PC-9 (cell line): ENCODE measurements at regions of chr20 and their contacts with region 1.

Region 1: GRCh38 chr20:61170496-61171320 is 81.4 kb upstream of the CDH4 start:
- DNase-seq: no peak
- H3K4me3 ChIP-seq: no peak overlapping the region
- H3K27ac ChIP-seq: no peak overlapping the region
- H3K4me1 ChIP-seq: no peaks in the 10 kb centered on the region
- H3K27me3 ChIP-seq: peaks cover 20% of the 10 kb centered on the region
- CTCF ChIP-seq: no peak

Region 2: DNA sequence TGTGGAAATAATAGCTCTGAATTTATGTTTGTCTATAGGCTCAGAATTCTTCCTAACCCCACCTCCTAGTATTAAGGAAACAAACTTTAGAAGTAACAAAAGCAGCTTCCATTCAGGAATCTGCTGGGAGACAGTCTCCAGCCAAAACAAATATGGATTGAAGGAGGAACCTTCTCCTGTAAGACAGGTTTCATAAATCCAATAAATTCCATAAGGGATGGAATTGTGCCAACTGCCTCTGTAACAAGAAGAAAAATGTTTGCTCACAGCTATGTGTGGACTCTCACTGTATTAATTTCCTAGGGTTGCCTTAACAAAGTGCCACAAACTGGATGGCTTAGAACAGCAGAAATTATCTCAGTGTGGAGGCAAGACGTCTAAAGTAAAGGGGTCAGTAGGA is 1244.8 kb before region 1 on chr20:
- CTCF ChIA-PET with region 1: no interaction called
- POLR2A ChIA-PET with region 1: no interaction called
- intact Hi-C with region 1: no loop called
- DNase-seq: peak in 1 of 2 experiments; percentile 95
- H3K4me3 ChIP-seq: no peak overlapping the region
- H3K27ac ChIP-seq: peak overlapping the region; percentile 48
- H3K4me1 ChIP-seq: peaks cover 29% of the 10 kb centered on the region
- H3K27me3 ChIP-seq: no peaks in the 10 kb centered on the region
- CTCF ChIP-seq: no peak

Region 3: DNA sequence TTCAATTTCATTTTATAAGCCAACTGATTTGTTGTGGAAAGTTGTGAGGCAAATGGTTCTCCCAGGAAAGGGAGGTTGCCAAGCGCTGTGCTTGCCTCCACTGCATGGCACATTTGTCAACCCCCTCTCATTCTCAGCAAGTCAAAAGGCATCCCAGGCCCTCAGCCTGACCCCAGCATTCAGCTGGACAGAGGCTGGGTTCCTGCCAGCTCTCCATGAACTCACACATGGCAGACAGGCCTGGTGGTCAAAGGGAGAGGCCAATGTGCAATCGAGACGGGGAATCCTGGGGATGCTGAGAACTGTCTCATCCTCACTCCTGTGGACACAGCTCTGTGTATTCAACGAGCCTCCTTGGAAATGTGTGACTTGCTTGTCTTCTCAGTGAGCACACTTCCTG is 24.7 kb before region 1 on chr20:
- CTCF ChIA-PET with region 1: no interaction called
- POLR2A ChIA-PET with region 1: interaction called, 14 read pairs
- intact Hi-C with region 1: no loop called
- DNase-seq: no peak
- H3K4me3 ChIP-seq: no peak overlapping the region
- H3K27ac ChIP-seq: no peak overlapping the region
- H3K4me1 ChIP-seq: no peaks in the 10 kb centered on the region
- H3K27me3 ChIP-seq: peaks cover 36% of the 10 kb centered on the region
- CTCF ChIP-seq: no peak